AG04450 (cell line): ENCODE measurements at regions of chr2 and their contacts with region 1.

Region 1: GRCh38 chr2:28276076-28276618 is 116.5 kb upstream of the FOSL2 start:
- DNase-seq: peak; percentile 97
- H3K4me3 ChIP-seq: no peak overlapping the region
- H3K27ac ChIP-seq: peak overlapping the region; percentile 95
- H3K27me3 ChIP-seq: no peaks in the 10 kb centered on the region
- CTCF ChIP-seq: no peak

Region 2: DNA sequence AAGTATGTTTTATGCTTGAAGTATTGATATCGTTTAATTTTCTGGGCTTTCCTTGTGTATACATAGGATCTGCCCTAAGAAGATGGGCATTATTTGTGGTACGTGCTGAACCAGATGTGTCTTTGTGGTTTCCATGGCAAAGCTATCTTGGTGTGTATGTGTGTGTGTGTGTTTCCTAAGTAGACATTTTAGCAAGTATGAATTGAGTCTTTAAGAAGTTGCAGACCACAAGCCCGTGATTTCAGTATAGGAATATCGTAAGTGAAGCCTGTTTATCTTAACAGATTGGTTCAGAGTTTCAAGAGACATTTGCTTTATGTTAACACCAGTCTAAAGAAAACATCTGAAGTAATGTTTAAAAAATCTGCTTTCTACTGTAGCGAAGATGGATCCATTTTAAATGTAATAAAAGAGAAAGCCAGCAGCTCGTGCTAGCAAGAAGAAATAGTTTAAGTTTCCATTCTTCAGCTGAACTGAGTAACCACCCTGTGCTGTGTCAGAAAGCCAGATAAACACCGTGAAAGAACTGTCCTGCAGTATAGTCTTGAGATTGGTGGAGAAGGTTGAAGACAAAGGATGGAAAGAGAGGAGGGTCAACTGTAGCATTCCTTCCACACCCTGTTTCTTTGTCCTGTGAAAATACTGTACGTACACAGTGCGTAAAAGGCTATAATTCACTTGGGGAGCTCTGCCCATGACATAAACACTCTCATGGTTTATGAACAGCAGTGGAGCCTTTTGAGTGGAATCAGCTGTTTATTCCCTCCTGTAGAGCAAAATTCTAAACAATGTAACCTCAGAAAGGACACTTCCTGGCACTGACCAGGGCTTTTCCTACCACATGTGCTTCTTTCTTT is 24.6 kb after region 1 on chr2:
- CTCF ChIA-PET with region 1: no interaction called
- POLR2A ChIA-PET with region 1: interaction called, 11 read pairs
- DNase-seq: peak; percentile 95
- H3K4me3 ChIP-seq: peak overlapping the region; percentile 37
- H3K27ac ChIP-seq: peak overlapping the region; percentile 98
- H3K27me3 ChIP-seq: no peaks in the 10 kb centered on the region
- CTCF ChIP-seq: no peak